Mammary epithelial cell (primary cell): ENCODE measurements at regions of chr15 and their contacts with region 1.

Region 1: GRCh38 chr15:50883903-50884302 is 24.6 kb upstream of the AP4E1 start:
- DNase-seq: peak; percentile 74
- H3K4me3 ChIP-seq: no peak overlapping the region
- H3K27ac ChIP-seq: peak overlapping the region; percentile 97
- H3K4me1 ChIP-seq: peaks cover 43% of the 10 kb centered on the region
- H3K27me3 ChIP-seq: no peaks in the 10 kb centered on the region
- CTCF ChIP-seq: no peak

Region 2: GRCh38 chr15:50613600-50613999 is 270.3 kb before region 1 on chr15:
- CTCF ChIA-PET with region 1: no interaction called
- dilution Hi-C with region 1: no loop called
- in situ Hi-C with region 1: no loop called
- intact Hi-C with region 1: loop called (anchors 5 kb)
- DNase-seq: no peak
- H3K4me3 ChIP-seq: no peak overlapping the region
- H3K27ac ChIP-seq: no peak overlapping the region
- H3K4me1 ChIP-seq: no peaks in the 10 kb centered on the region
- H3K27me3 ChIP-seq: no peaks in the 10 kb centered on the region
- CTCF ChIP-seq: no peak

Region 3: DNA sequence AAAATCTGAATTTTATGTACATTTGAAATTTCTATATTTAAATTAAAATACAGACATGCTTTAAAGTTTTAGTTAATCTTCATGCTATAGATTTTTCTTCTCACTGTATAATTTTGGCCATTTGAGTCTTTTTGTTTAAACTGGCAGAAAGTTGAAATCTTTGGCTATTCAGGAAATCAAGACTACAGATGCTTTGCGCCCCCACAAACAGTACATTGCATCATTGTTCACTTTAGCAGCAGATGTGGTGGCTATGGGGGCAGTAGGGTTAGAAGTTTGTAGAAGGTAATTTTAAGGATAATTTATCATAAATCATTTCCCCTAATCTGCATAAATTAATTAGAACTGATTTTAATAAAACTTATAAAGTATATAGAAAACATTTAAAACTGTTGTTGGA is 139.3 kb before region 1 on chr15:
- CTCF ChIA-PET with region 1: interaction called, 13 read pairs
- dilution Hi-C with region 1: no loop called
- in situ Hi-C with region 1: no loop called
- intact Hi-C with region 1: loop called (anchors 5 kb)
- DNase-seq: no peak
- H3K4me3 ChIP-seq: no peak overlapping the region
- H3K27ac ChIP-seq: no peak overlapping the region
- H3K4me1 ChIP-seq: peaks cover 5% of the 10 kb centered on the region
- H3K27me3 ChIP-seq: no peaks in the 10 kb centered on the region
- CTCF ChIP-seq: no peak

Region 4: GRCh38 chr15:50953302-50953701 is 69.4 kb after region 1 on chr15:
- CTCF ChIA-PET with region 1: no interaction called
- dilution Hi-C with region 1: no loop called
- in situ Hi-C with region 1: no loop called
- intact Hi-C with region 1: loop called (anchors 2 kb)
- DNase-seq: peak; percentile 83
- H3K4me3 ChIP-seq: no peak overlapping the region
- H3K27ac ChIP-seq: peak overlapping the region; percentile 50
- H3K4me1 ChIP-seq: peaks cover 9% of the 10 kb centered on the region
- H3K27me3 ChIP-seq: no peaks in the 10 kb centered on the region
- CTCF ChIP-seq: no peak